ENCODE measurements at regions of chr4 and their contacts with region 1.

Region 1: DNA sequence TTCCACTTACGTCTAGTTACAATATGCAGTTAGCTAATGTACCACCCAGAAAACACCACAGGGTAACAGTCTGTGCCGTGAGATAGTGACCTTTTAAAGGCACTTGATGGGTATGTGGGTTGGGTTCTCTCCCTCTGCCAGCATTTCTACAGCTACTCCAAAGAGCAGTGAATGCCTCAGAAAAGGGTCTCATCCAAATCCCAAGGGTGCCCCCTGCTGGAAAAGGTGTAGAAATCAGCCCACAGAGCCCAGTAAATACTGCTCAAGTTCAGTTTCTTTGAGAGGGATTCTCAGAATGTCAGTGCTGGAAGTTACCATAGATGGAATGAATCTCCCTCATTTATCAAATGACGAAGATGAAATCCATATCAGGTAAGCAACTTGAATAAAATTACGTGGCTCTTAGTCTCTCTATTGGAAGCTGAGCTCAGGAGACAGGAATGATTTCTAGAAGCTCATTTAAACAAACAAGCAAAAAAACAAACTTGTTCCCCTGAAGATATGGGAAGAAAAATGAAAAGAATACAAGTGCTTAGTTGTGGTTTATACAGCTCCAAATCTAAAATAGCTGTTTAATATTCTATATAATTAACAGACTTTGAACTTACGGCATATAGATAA is 9.5 kb downstream of the RNF175 start:
- DNase-seq: peak; percentile 66 to 79
- H3K4me3 ChIP-seq: no peak overlapping the region
- H3K4me3 Mint-ChIP-seq: no peak overlapping the region
- H3K27ac Mint-ChIP-seq: no peak overlapping the region
- H3K4me1 ChIP-seq: no peaks in the 10 kb centered on the region
- H3K4me1 Mint-ChIP-seq: no peaks in the 10 kb centered on the region
- H3K27me3 ChIP-seq: no peaks in the 10 kb centered on the region
- H3K27me3 Mint-ChIP-seq: peaks cover 2% of the 10 kb centered on the region
- CTCF ChIP-seq: peak; percentile 58 to 80

Region 2: DNA sequence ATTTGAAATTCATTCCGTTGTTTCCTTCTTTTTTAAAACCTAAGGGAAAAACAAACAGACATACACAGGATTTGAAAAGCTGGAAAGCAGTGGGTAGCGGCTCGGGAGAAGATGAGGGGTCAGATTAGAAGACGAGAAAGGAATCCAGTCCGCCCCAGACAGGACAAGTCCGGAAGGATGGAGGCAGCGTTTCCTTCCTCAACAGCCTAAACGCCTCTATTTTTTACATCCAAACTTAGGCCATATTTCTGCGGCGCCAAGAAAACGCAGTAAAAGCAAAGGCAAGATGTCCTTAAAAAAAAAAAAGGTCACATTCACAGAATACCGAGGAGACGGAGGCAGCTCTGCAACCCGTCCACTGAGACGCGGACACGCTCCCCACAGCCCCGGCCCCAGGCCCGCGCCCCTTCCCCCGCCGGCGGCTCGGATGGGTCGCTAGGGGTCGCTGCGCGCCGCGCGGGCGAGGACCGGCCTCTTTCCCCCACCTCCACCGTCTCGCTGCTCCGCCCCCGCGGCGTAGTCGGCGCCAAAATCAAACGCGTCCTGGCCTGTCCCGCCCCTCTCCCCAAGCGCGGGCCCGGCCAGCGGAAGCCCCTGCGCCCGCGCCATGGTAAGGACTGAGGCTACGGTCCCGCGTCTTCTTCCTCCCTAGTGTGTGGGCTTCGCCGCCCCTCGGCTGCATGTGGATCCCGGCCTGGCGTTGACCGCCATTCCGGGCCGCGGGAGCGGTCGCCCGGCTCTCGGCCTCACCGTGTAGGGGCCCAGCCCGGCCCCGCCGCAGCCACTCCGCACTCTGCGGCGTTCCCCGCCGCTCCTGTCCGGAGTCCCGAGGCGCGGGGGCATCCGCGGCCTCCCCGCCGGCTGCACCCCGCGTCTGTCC is 405.9 kb before region 1 on chr4 and contains the start of gene MND1:
- CTCF ChIA-PET with region 1: no interaction called
- POLR2A ChIA-PET with region 1: no interaction called
- intact Hi-C with region 1: loop called (anchors 1 kb)
- DNase-seq: peak; percentile 89 to 94
- H3K4me3 ChIP-seq: peak within 1 kb of the TSS; percentile 88
- H3K4me3 Mint-ChIP-seq: peak within 1 kb of the TSS; percentile 81
- H3K27ac Mint-ChIP-seq: peak within 1 kb of the TSS; percentile 82
- H3K4me1 ChIP-seq: peaks cover 17% of the 10 kb centered on the region
- H3K4me1 Mint-ChIP-seq: peaks cover 20% of the 10 kb centered on the region
- H3K27me3 ChIP-seq: no peaks in the 10 kb centered on the region
- H3K27me3 Mint-ChIP-seq: no peaks in the 10 kb centered on the region
- CTCF ChIP-seq: peak; percentile 62 to 95
- total RNA-seq, gene MND1: 19.8 and 21.8 TPM in 2 replicates

Region 3: GRCh38 chr4:153594210-153594609 is 156.1 kb before region 1 on chr4:
- CTCF ChIA-PET with region 1: no interaction called
- POLR2A ChIA-PET with region 1: no interaction called
- intact Hi-C with region 1: loop called (anchors 5 kb)
- DNase-seq: no peak
- H3K4me3 ChIP-seq: no peak overlapping the region
- H3K4me3 Mint-ChIP-seq: no peak overlapping the region
- H3K27ac Mint-ChIP-seq: no peak overlapping the region
- H3K4me1 ChIP-seq: no peaks in the 10 kb centered on the region
- H3K4me1 Mint-ChIP-seq: no peaks in the 10 kb centered on the region
- H3K27me3 ChIP-seq: no peaks in the 10 kb centered on the region
- H3K27me3 Mint-ChIP-seq: no peaks in the 10 kb centered on the region
- CTCF ChIP-seq: no peak

Region 4: GRCh38 chr4:153634738-153635353 is 115.5 kb before region 1 on chr4:
- CTCF ChIA-PET with region 1: no interaction called
- POLR2A ChIA-PET with region 1: no interaction called
- intact Hi-C with region 1: loop called (anchors 1 kb)
- DNase-seq: peak in 1 of 2 experiments; percentile 27
- H3K4me3 ChIP-seq: no peak overlapping the region
- H3K4me3 Mint-ChIP-seq: no peak overlapping the region
- H3K27ac Mint-ChIP-seq: no peak overlapping the region
- H3K4me1 ChIP-seq: no peaks in the 10 kb centered on the region
- H3K4me1 Mint-ChIP-seq: peaks cover 1% of the 10 kb centered on the region
- H3K27me3 ChIP-seq: no peaks in the 10 kb centered on the region
- H3K27me3 Mint-ChIP-seq: no peaks in the 10 kb centered on the region
- CTCF ChIP-seq: peak; percentile 48 to 50

Region 5: GRCh38 chr4:153684182-153684970 is 65.9 kb before region 1 on chr4 and contains the start of gene TLR2:
- CTCF ChIA-PET with region 1: interaction called, 5 read pairs
- POLR2A ChIA-PET with region 1: no interaction called
- intact Hi-C with region 1: loop called (anchors 2 kb)
- DNase-seq: peak; percentile 68 to 72
- H3K4me3 ChIP-seq: peak within 1 kb of the TSS; percentile 49
- H3K4me3 Mint-ChIP-seq: peak within 1 kb of the TSS; percentile 77
- H3K27ac Mint-ChIP-seq: no peak within 1 kb of the TSS
- H3K4me1 ChIP-seq: no peaks in the 10 kb centered on the region
- H3K4me1 Mint-ChIP-seq: peaks cover 8% of the 10 kb centered on the region
- H3K27me3 ChIP-seq: no peaks in the 10 kb centered on the region
- H3K27me3 Mint-ChIP-seq: no peaks in the 10 kb centered on the region
- CTCF ChIP-seq: peak in 1 of 2 experiments; percentile 7
- total RNA-seq, gene TLR2: 7.8 and 11.0 TPM in 2 replicates

Region 6: GRCh38 chr4:153725136-153725830 is 25.0 kb before region 1 on chr4:
- CTCF ChIA-PET with region 1: no interaction called
- POLR2A ChIA-PET with region 1: no interaction called
- intact Hi-C with region 1: no loop called
- DNase-seq: no peak
- H3K4me3 ChIP-seq: no peak overlapping the region
- H3K4me3 Mint-ChIP-seq: no peak overlapping the region
- H3K27ac Mint-ChIP-seq: no peak overlapping the region
- H3K4me1 ChIP-seq: no peaks in the 10 kb centered on the region
- H3K4me1 Mint-ChIP-seq: no peaks in the 10 kb centered on the region
- H3K27me3 ChIP-seq: no peaks in the 10 kb centered on the region
- H3K27me3 Mint-ChIP-seq: peaks cover 3% of the 10 kb centered on the region
- CTCF ChIP-seq: no peak